ENCODE measurements at regions of chr7 and their contacts with region 1.

Region 1: GRCh38 chr7:37510043-37510634 is 61.5 kb upstream of the ELMO1 start:
- DNase-seq: no peak
- ATAC-seq: no peak

Region 2: GRCh38 chr7:37225285-37225969 is 284.7 kb before region 1 on chr7:
- intact Hi-C with region 1: loop called in 1 of 2 experiments (anchors 10 kb)
- DNase-seq: no peak
- ATAC-seq: no peak

Measured in left cardiac atrium (tissue), 4 donors.